Gastrocnemius medialis (tissue), 4 donors: ENCODE measurements at regions of chr17 and their contacts with region 1.

Region 1: GRCh38 chr17:19766422-19767270 is 18.5 kb upstream of the ALDH3A1 start:
- DNase-seq: peak; percentile 44 to 70
- ATAC-seq: peak; percentile 93 to 94
- H3K4me3 ChIP-seq: no peak overlapping the region
- H3K27ac ChIP-seq: no peak overlapping the region
- H3K4me1 ChIP-seq: no peaks in the 10 kb centered on the region
- H3K27me3 ChIP-seq: no peaks in the 10 kb centered on the region
- CTCF ChIP-seq: peak; percentile 87 to 99 (median 94)
- POLR2A ChIP-seq: no peak

Region 2: DNA sequence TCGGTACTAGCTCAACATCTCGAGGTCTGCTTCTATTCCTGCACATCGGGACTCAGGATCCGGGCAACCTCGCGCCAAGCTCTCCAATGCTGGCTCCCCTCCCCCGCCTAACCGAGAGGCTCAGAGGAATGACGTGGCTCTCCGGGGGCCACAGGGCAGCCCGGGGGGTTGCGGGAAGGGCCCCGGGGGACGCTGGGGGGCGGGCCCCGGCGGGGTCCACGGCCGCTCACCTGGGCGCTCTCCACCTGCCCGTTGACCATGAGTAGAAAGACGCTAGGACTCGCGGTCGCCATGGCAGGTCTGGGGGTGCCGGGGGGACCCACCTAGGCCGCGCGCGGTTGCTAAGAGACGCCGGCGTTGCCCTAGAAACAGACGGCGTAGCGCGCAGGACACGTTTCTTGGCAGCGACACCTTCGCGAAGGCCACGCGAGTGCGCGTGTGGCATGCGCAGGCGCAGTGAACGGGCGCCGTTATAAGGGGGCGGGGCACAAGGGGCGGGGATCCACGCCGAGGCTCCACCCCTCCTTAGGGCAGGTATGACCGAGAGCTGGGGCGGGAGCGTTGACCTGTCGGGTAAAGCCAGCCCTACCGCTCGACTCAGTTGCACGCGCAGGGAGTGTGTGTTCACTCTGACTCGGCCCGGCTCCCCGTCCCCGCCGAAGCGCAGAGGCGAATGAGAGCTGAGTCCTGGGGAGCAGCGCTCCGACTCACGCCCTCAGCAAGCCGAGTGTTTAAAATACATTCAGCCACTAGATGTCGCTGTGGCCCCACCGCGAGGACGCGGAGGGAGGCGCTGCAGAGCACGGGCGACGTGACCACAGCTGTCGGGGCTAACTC is 404.2 kb before region 1 on chr17 and contains the start of gene B9D1:
- in situ Hi-C with region 1: loop called (anchors 10 to 25 kb)
- intact Hi-C with region 1: loop called (anchors 2 kb)
- DNase-seq: peak; percentile 86 to 93
- ATAC-seq: peak; percentile 96 to 97
- H3K4me3 ChIP-seq: peak within 1 kb of the TSS; percentile 60 to 86 (median 72)
- H3K27ac ChIP-seq: peak within 1 kb of the TSS; percentile 79 to 92 (median 84)
- H3K4me1 ChIP-seq: peaks cover 4 to 9% of the 10 kb centered on the region in 2 donors
- H3K27me3 ChIP-seq: no peaks in the 10 kb centered on the region
- CTCF ChIP-seq: peak; percentile 99
- POLR2A ChIP-seq: peak in 1 of 2 donors; percentile 44
- total RNA-seq, gene B9D1: 6.5 to 16.4 (median 14.5) TPM